ENCODE measurements at regions of chr11 and their contacts with region 1.

Region 1: GRCh38 chr11:117171404-117172061 is 7.0 kb upstream of the SIDT2 start:
- DNase-seq: peak in 2 of 3 donors; percentile 11 to 23
- H3K4me3 ChIP-seq: no peak overlapping the region
- H3K27ac ChIP-seq: peak overlapping the region in 1 of 2 experiments; percentile 39
- H3K4me1 ChIP-seq: peaks cover 0 to 9% (median 5%) of the 10 kb centered on the region in 4 experiments
- H3K27me3 ChIP-seq: no peaks in the 10 kb centered on the region

Region 2: GRCh38 chr11:117160826-117161225 is 10.7 kb before region 1 on chr11:
- CTCF ChIA-PET with region 1: interaction called, 17 read pairs
- POLR2A ChIA-PET with region 1: interaction called, 3 read pairs
- DNase-seq: peak; percentile 39 to 82 (median 63)
- H3K4me3 ChIP-seq: no peak overlapping the region
- H3K27ac ChIP-seq: no peak overlapping the region
- H3K4me1 ChIP-seq: peaks cover 0 to 8% (median 3%) of the 10 kb centered on the region in 4 experiments
- H3K27me3 ChIP-seq: no peaks in the 10 kb centered on the region

Measured in common myeloid progenitor, CD34-positive (primary cell).